Common myeloid progenitor, CD34-positive (primary cell): ENCODE measurements at regions of chr17 and their contacts with region 1.

Region 1: GRCh38 chr17:17641621-17642409 is 39.4 kb upstream of the RAI1 start:
- DNase-seq: peak; percentile 70 to 89 (median 82)
- H3K4me3 ChIP-seq: no peak overlapping the region
- H3K27ac ChIP-seq: no peak overlapping the region
- H3K4me1 ChIP-seq: no peaks in the 10 kb centered on the region
- H3K27me3 ChIP-seq: no peaks in the 10 kb centered on the region

Region 2: GRCh38 chr17:17591355-17592298 is 50.2 kb before region 1 on chr17 and contains the start of gene PEMT:
- CTCF ChIA-PET with region 1: interaction called, 10 read pairs
- POLR2A ChIA-PET with region 1: no interaction called
- DNase-seq: peak; percentile 99
- H3K4me3 ChIP-seq: peak within 1 kb of the TSS; percentile 77 to 95 (median 92)
- H3K27ac ChIP-seq: peak within 1 kb of the TSS; percentile 54 to 86
- H3K4me1 ChIP-seq: peaks cover 0 to 29% (median 27%) of the 10 kb centered on the region in 4 experiments
- H3K27me3 ChIP-seq: no peaks in the 10 kb centered on the region

Region 3: DNA sequence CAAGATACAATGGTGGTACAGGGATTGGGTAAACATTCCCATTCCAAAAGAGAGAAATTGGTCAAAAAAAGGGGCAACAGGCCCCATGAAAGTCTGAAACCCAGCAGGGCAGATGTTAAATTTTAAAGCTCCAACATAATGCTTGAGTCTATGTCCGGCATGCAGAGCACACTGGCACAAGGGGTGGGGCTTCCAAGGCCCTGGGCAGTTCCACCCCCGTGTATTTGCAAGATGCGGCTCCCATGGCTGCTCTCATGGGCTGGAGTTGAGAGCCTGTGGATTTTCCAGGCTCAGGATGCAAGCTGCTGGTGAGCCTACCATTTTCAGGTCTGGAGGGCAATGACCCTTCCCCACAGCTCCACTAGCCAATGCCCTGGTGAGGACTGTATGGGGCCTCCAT is 11.5 kb after region 1 on chr17:
- CTCF ChIA-PET with region 1: interaction called, 22 read pairs
- POLR2A ChIA-PET with region 1: no interaction called
- DNase-seq: no peak
- H3K4me3 ChIP-seq: no peak overlapping the region
- H3K27ac ChIP-seq: no peak overlapping the region
- H3K4me1 ChIP-seq: no peaks in the 10 kb centered on the region
- H3K27me3 ChIP-seq: no peaks in the 10 kb centered on the region

Region 4: GRCh38 chr17:17694169-17695081 is 52.6 kb after region 1 on chr17:
- CTCF ChIA-PET with region 1: no interaction called
- POLR2A ChIA-PET with region 1: no interaction called
- DNase-seq: peak; percentile 88 to 97 (median 95)
- H3K4me3 ChIP-seq: peak overlapping the region; percentile 48 to 81 (median 75)
- H3K27ac ChIP-seq: peak overlapping the region; percentile 89 to 92
- H3K4me1 ChIP-seq: peaks cover 11 to 95% (median 95%) of the 10 kb centered on the region in 4 experiments
- H3K27me3 ChIP-seq: no peaks in the 10 kb centered on the region